Psoas muscle (tissue), 8 donors: ENCODE measurements at regions of chr16 and their contacts with region 1.

Region 1: GRCh38 chr16:85541980-85542900 is 70.9 kb upstream of the GSE1 start:
- DNase-seq: no peak
- ATAC-seq: peak in 3 of 4 donors; percentile 15 to 47 (median 42)
- H3K4me3 ChIP-seq: no peak overlapping the region
- H3K27ac ChIP-seq: no peak overlapping the region
- H3K4me1 ChIP-seq: peaks cover 25% of the 10 kb centered on the region
- H3K27me3 ChIP-seq: no peaks in the 10 kb centered on the region
- CTCF ChIP-seq: no peak

Region 2: GRCh38 chr16:85491058-85491771 is 51.0 kb before region 1 on chr16:
- intact Hi-C with region 1: loop called in 1 of 2 experiments (anchors 10 kb)
- DNase-seq: no peak
- ATAC-seq: peak; percentile 7 to 25 (median 20)
- H3K4me3 ChIP-seq: no peak overlapping the region
- H3K27ac ChIP-seq: peak overlapping the region; percentile 80
- H3K4me1 ChIP-seq: peaks cover 20% of the 10 kb centered on the region
- H3K27me3 ChIP-seq: no peaks in the 10 kb centered on the region
- CTCF ChIP-seq: peak; percentile 23

Region 3: DNA sequence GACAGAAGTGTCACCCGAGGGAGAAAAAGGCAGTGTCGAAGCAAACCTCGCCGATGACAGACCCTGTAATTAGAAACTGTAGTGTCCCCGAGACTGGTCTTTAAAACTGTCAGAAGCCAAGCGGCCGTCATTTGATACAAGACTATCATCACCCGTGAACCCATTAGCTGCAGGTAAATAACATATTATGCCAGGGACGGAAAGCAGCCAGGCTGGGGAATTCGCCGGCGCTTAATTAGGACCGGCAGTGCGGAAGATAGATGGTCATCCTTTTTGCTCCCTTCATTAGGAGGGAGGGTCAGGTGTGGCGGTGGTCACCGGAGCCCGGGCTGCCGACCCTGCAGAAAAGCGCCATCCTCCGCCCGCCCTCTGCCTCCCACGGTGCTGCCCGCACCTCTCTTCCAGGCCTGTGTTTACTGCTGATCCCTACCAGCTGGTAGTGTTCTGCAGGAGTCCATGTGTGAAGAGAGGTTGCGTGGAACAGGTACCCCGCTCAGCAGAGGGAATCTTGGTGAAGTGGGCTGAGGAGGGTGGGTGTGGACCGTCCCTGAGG is 38.5 kb before region 1 on chr16:
- intact Hi-C with region 1: loop called (anchors 5 to 10 kb)
- DNase-seq: no peak
- ATAC-seq: peak in 3 of 4 donors; percentile 8 to 31 (median 20)
- H3K4me3 ChIP-seq: no peak overlapping the region
- H3K27ac ChIP-seq: peak overlapping the region; percentile 50
- H3K4me1 ChIP-seq: peaks cover 33% of the 10 kb centered on the region
- H3K27me3 ChIP-seq: no peaks in the 10 kb centered on the region
- CTCF ChIP-seq: no peak